Activated CD8-positive, alpha-beta memory T cell treated with anti-CD3 and anti-CD28 coated beads, Interleukin-2, amount 10 ng/mL, durations not matched to agents 7 days and 5 days (primary cell): ENCODE measurements at regions of chr18 and their contacts with region 1.

Region 1: GRCh38 chr18:48022531-48023329 is 92.3 kb upstream of the SMAD2 start:
- DNase-seq: no peak
- ATAC-seq: peak; percentile 73
- H3K4me3 Mint-ChIP-seq: no peak overlapping the region
- H3K27ac Mint-ChIP-seq: no peak overlapping the region
- H3K4me1 Mint-ChIP-seq: peaks cover 8% of the 10 kb centered on the region
- H3K27me3 Mint-ChIP-seq: peaks cover 28% of the 10 kb centered on the region

Region 2: DNA sequence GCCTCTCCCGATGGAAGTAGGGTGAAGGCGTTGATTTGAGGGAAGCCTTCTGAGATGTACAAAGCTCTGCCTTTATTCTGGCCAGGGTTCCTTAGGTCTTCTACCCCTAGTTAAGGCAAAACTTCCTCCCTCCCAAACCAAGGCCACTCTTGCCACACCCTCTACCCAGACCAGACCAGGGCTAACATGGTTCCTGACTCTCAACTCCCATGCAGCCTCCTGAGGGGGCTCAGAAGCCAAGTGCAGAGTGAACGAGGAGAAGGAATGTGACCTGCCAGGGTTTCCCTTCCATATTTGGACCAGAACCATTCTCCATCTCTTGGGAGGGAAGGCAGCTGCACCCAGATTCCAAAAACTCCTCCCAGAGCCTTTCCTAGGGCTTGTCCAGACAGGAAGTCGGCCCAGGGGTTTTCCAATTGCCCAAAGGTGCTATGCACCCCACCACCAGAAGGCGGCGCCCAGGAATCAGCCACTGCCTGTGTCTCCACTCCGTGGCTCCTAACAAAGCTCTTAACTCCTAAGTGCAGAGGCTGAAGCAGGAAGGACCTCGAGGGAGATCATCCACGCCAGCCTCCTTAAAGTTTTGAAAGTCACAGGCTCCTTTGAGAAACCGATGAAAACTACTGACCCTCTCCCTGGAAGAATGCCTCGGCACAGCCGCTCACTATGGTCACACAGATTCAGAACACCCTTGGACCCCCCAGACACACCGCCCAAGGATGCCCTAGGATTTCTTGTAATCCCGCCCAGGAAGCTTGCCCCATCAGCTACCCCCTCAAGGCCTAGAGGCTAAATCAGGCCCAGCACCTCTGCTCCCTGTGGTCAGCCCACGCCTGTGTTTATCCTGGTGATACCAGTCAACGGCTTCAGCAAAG is 250.1 kb before region 1 on chr18:
- CTCF ChIA-PET with region 1: interaction called, 16 read pairs
- DNase-seq: peak; percentile 71
- ATAC-seq: peak; percentile 65
- H3K4me3 Mint-ChIP-seq: no peak overlapping the region
- H3K27ac Mint-ChIP-seq: no peak overlapping the region
- H3K4me1 Mint-ChIP-seq: peaks cover 7% of the 10 kb centered on the region
- H3K27me3 Mint-ChIP-seq: peaks cover 4% of the 10 kb centered on the region

Region 3: DNA sequence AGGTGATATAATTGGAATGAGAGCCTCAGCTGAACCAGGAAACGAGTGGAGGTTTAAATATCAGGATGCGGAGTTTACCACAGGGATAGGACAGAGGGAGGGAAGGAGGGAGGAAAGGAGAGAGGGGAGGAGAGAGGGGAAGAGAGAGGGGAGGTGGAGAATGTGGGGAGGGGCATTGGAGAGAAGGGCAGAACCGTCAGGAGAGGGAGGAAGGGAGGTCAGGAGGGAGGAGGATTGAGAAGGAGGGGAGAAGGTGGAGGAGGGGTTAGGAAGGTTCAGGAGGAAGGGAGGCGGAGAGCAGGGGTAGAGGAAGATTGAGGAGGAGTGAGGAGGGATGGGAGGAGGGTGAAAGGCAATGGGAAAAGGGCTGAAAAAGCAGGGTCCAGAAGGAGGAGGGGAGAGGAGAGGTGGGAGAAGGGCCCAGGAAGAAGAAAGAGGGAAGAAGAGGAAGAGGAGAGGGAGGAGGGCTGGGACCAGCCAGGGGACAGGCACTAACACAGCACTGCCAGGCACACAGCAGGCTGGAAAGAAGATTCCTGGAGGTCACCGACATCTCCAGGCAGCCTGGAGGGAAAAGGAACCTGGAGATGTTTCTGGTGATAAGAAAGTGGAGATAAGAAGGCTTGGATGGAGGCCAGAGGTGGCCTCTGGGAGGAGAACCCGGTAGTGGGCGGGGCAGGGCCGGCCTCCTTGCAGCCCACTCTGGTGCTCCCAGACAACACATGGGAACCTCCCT is 84.4 kb after region 1 on chr18:
- CTCF ChIA-PET with region 1: no interaction called
- DNase-seq: no peak
- ATAC-seq: no peak
- H3K4me3 Mint-ChIP-seq: no peak overlapping the region
- H3K27ac Mint-ChIP-seq: no peak overlapping the region
- H3K4me1 Mint-ChIP-seq: peaks cover 7% of the 10 kb centered on the region
- H3K27me3 Mint-ChIP-seq: peaks cover 64% of the 10 kb centered on the region

Region 4: GRCh38 chr18:48208432-48209140 is 185.9 kb after region 1 on chr18:
- CTCF ChIA-PET with region 1: no interaction called
- DNase-seq: no peak
- ATAC-seq: no peak
- H3K4me3 Mint-ChIP-seq: no peak overlapping the region
- H3K27ac Mint-ChIP-seq: no peak overlapping the region
- H3K4me1 Mint-ChIP-seq: no peaks in the 10 kb centered on the region
- H3K27me3 Mint-ChIP-seq: peaks cover 41% of the 10 kb centered on the region